ENCODE measurements at regions of chr12 and their contacts with region 1.

Region 1: GRCh38 chr12:130013771-130014484 is 110.1 kb upstream of the TMEM132D start:
- DNase-seq: peak; percentile 29
- H3K4me3 ChIP-seq: no peak overlapping the region
- H3K27ac ChIP-seq: no peak overlapping the region
- H3K4me1 ChIP-seq: no peaks in the 10 kb centered on the region
- CTCF ChIP-seq: peak; percentile 69

Region 2: DNA sequence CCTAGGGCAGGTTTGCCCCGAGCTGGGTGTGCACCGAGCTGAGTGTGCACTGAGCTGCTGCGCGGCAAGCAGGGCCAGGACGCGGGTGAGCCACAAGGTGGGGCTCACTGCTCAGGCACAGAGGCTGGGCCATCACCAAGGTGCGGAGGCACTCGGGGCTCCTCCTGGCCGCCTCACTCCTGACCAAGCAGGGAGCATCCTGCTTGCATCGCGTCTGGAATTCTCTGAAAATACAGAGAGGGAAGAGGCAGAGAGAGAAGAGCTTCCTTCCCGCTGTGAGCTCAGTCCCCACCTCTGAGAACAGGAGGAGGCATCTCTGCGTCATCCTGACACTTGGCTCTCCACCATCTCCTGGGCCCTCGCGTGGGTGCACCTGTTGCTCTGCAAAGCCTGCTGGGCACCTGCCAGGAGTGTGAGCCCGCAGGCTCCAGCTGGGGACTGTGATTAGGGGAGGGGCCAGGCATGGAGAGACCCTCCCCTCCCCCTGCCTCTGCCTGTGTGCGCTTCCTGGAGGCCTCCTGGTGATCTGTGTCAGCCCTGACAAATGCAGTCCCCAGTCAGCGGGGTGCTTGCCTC is 1044.4 kb before region 1 on chr12:
- CTCF ChIA-PET with region 1: no interaction called
- POLR2A ChIA-PET with region 1: no interaction called
- intact Hi-C with region 1: loop called (anchors 5 kb)
- DNase-seq: peak; percentile 52
- H3K4me3 ChIP-seq: no peak overlapping the region
- H3K27ac ChIP-seq: no peak overlapping the region
- H3K4me1 ChIP-seq: peaks cover 4% of the 10 kb centered on the region
- CTCF ChIP-seq: peak; percentile 75

Measured in OCI-LY7 (cell line).